ENCODE measurements at regions of chr3 and their contacts with region 1.

Region 1: DNA sequence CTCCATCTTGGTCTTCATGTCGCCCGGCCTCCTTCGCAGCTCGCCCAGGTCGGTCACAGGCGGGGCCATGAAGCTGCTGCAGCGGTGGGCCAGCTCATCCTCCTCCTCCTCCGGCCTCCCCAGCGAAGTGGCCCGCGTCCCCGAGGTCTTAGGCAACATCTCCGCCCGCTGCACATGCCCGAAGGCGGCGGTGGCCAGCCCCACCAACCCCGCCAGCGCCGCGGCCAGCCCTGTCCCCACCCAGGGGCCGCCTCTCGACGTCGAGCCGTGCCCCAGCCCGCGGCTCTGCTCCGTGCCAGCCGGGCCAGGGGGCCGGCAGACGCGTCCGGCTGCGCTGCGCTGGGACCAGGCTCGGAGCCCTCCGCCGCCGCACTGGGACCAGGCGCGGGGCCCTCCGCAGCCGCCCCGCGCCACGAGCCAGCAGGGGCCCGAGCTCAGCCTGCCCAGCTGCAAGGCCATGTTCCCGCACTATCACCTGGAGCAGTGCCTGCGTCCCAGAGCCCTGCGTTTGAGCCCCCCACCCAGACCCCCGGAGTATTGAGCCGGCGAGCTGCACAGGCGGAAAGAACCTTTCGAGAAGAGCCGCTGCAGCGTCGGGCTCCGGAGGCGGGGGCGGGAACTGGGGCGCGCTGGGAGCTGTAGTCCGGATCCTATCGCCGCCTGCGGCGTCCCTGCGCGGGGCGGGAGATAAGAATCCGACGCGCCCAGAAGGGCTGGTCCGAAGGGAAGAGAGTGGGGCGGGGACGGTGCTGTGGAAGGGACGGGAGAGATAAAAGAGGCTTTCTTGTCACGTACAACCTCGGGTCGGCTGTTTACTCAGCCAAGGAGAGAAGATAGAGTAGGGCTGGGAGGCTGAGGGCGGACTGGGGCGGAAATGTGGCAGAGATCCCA is at the start of gene CPOX:
- DNase-seq: peak; percentile 60
- H3K4me3 ChIP-seq: peak within 1 kb of the TSS; percentile 81
- H3K27ac ChIP-seq: peak within 1 kb of the TSS; percentile 47
- H3K27me3 ChIP-seq: no peaks in the 10 kb centered on the region
- CTCF ChIP-seq: no peak
- polyA plus RNA-seq, gene CPOX: 15.7 and 19.6 TPM in 2 replicates

Region 2: GRCh38 chr3:98395101-98395500 is 198.2 kb before region 1 on chr3:
- CTCF ChIA-PET with region 1: no interaction called
- POLR2A ChIA-PET with region 1: no interaction called
- DNase-seq: no peak
- H3K4me3 ChIP-seq: no peak overlapping the region
- H3K27ac ChIP-seq: no peak overlapping the region
- H3K27me3 ChIP-seq: no peaks in the 10 kb centered on the region
- CTCF ChIP-seq: no peak

Region 3: DNA sequence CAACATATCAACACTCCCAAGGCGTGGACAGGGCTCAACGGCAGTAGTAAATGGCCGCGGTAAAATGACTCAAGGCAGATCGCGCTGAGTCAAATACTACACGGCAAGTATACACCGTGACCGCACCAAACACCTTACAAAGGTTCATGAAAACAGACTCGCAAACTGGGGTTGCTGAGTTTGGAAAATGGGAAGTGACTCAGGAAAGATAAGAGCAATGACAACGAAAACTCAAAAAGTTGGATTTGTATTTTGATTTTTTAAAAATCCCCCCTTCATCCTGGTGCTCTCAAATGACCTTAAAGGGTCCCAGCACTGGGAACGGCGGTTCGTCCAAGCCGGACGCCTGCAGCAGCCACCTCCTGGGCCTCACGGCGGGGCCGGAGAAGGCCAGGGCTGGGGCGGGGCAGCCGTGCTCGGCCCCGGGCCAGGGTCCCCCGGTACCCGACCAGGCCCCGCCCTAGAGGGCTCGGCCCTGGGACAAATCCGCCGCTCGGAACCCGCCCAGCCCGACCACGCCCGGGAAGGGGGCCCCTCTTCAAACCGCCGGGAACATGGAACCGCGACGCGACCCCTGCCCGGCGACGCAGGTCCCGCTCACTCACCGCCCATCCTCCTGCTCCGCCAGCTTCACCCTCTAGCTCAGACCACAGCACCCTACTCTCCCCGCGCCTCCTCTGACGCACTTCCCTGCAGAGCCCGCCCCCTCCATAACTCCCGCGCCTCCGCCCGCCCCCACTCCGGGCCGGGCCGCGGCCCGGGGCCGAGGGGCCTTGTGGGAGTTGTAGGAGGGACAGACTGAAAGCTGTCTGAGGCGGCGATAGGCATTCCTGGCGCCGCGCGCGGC is 70.8 kb before region 1 on chr3 and contains the start of gene CLDND1:
- CTCF ChIA-PET with region 1: no interaction called
- POLR2A ChIA-PET with region 1: interaction called, 14 read pairs
- DNase-seq: peak; percentile 82
- H3K4me3 ChIP-seq: peak within 1 kb of the TSS; percentile 76
- H3K27ac ChIP-seq: peak within 1 kb of the TSS; percentile 87
- H3K27me3 ChIP-seq: no peaks in the 10 kb centered on the region
- CTCF ChIP-seq: no peak
- polyA plus RNA-seq, gene CLDND1: 102 and 129 TPM in 2 replicates

Region 4: GRCh38 chr3:98646680-98647079 is 53.4 kb after region 1 on chr3:
- CTCF ChIA-PET with region 1: no interaction called
- POLR2A ChIA-PET with region 1: no interaction called
- DNase-seq: no peak
- H3K4me3 ChIP-seq: no peak overlapping the region
- H3K27ac ChIP-seq: no peak overlapping the region
- H3K27me3 ChIP-seq: no peaks in the 10 kb centered on the region
- CTCF ChIP-seq: no peak

Region 5: GRCh38 chr3:98784666-98785600 is 191.6 kb after region 1 on chr3:
- CTCF ChIA-PET with region 1: interaction called, 12 read pairs
- POLR2A ChIA-PET with region 1: interaction called, 3 read pairs
- DNase-seq: peak; percentile 84
- H3K4me3 ChIP-seq: no peak overlapping the region
- H3K27ac ChIP-seq: peak overlapping the region; percentile 72
- H3K27me3 ChIP-seq: no peaks in the 10 kb centered on the region
- CTCF ChIP-seq: no peak

Region 6: GRCh38 chr3:98791341-98792325 is 198.3 kb after region 1 on chr3:
- CTCF ChIA-PET with region 1: interaction called, 14 read pairs
- POLR2A ChIA-PET with region 1: no interaction called
- DNase-seq: no peak
- H3K4me3 ChIP-seq: no peak overlapping the region
- H3K27ac ChIP-seq: no peak overlapping the region
- H3K27me3 ChIP-seq: no peaks in the 10 kb centered on the region
- CTCF ChIP-seq: no peak

Measured in AG04450 (cell line).